CD8-positive, alpha-beta T cell (primary cell): ENCODE measurements at regions of chr7 and their contacts with region 1.

Region 1: DNA sequence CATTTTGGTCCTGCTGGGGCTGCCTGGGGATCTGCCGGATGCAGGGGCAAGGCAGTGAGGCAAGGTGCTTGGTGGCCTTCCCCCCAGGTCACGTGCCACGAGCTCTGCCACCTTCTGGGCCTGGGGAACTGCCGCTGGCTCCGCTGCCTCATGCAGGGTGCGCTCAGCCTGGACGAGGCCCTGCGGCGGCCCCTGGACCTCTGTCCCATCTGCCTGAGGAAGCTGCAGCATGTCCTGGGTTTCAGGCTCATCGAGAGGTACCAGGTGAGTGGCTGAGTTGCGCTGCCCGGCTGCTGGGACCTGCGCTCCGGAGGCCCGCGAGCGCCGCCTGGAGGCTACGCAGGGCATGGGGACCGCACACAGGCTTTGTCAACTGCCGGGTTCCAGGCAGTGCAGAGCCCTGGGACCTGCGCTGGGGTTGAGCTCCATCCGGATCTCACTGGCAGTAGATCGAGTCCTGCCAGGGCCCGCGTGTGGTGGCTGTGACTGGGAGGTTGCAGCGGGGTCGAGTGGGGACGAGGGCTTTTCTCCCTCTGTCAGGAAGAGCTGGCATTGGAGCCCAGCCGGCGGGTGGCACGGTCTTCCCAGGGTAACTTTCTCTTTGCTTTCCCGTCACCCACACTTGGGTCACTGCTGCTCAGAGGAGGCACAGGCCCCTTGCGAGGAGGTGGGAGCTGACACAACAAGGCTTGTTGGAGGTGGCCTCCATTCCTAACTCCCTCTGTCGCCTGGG is 21.7 kb downstream of the AMZ1 start:
- DNase-seq: peak; percentile 58 to 90 (median 76)
- ATAC-seq: peak; percentile 78
- H3K4me3 ChIP-seq: peak overlapping the region; percentile 31 to 38
- H3K4me3 Mint-ChIP-seq: peak overlapping the region; percentile 66
- H3K27ac ChIP-seq: no peak overlapping the region
- H3K27ac Mint-ChIP-seq: peak overlapping the region; percentile 62
- H3K4me1 ChIP-seq: peaks cover 32% of the 10 kb centered on the region
- H3K4me1 Mint-ChIP-seq: peaks cover 30% of the 10 kb centered on the region
- H3K27me3 ChIP-seq: peaks cover 7 to 9% of the 10 kb centered on the region in 2 experiments
- H3K27me3 Mint-ChIP-seq: peaks cover 8% of the 10 kb centered on the region
- CTCF ChIP-seq: peak; percentile 83

Region 2: DNA sequence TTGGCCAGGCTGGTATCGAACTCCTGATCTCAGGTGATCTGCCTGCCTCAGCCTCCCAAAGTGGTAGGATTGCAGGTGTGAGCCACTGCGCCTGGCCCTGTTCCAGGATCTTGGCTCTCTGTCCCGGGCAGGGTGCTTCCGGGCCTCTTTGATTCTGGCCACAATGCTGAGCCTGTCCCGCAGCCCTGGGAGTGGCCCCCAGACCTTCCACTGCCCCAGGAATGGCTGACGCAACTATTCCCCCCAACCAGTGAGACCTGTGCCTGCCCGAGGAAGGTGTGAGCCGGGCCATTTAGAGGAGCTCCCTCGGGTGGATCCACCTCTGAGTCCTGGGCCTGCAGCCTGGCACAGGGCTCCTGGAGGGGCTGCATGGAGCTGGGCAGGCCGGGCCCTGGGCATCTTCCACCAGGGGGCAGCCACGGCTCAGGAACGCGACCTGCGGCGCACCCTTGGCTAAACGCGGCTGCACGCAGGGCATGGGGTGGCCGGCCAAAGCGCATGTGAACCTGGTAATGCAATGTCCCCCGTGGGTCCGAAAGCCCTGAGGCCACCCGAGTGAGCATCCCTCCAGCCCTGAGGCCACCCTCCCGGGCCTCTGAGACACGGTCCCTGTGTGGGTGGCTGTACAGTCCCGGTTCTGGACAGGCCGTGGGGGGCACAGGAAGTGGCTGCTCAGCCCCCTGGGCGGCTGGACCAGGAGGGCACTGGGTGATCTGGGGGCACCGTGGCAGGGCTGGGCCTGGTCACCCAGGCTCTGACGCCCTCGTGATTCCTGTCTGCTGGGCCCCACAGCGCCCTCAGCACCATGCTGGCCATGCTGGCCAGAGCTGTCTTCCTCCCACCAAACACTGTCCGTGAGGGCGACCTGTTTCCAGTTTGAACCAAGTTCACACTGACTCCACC is 258.3 kb before region 1 on chr7:
- CTCF ChIA-PET with region 1: interaction called, 36 read pairs
- POLR2A ChIA-PET with region 1: no interaction called
- intact Hi-C with region 1: loop called (anchors 1 kb)
- DNase-seq: peak; percentile 55 to 87 (median 79)
- ATAC-seq: peak; percentile 96
- H3K4me3 ChIP-seq: peak overlapping the region; percentile 45 to 56
- H3K4me3 Mint-ChIP-seq: peak overlapping the region; percentile 67
- H3K27ac ChIP-seq: no peak overlapping the region
- H3K27ac Mint-ChIP-seq: no peak overlapping the region
- H3K4me1 ChIP-seq: peaks cover 8% of the 10 kb centered on the region
- H3K4me1 Mint-ChIP-seq: peaks cover 11% of the 10 kb centered on the region
- H3K27me3 ChIP-seq: no peaks in the 10 kb centered on the region
- H3K27me3 Mint-ChIP-seq: no peaks in the 10 kb centered on the region
- CTCF ChIP-seq: peak; percentile 70

Region 3: GRCh38 chr7:2670720-2671391 is 38.9 kb before region 1 on chr7:
- CTCF ChIA-PET with region 1: interaction called, 264 read pairs
- POLR2A ChIA-PET with region 1: interaction called, 11 read pairs
- intact Hi-C with region 1: loop called (anchors 1 kb)
- DNase-seq: peak; percentile 37 to 83 (median 73)
- ATAC-seq: peak; percentile 87
- H3K4me3 ChIP-seq: no peak overlapping the region
- H3K4me3 Mint-ChIP-seq: no peak overlapping the region
- H3K27ac ChIP-seq: no peak overlapping the region
- H3K27ac Mint-ChIP-seq: no peak overlapping the region
- H3K4me1 ChIP-seq: peaks cover 8% of the 10 kb centered on the region
- H3K4me1 Mint-ChIP-seq: peaks cover 6% of the 10 kb centered on the region
- H3K27me3 ChIP-seq: no peaks in the 10 kb centered on the region
- H3K27me3 Mint-ChIP-seq: peaks cover 21% of the 10 kb centered on the region
- CTCF ChIP-seq: peak; percentile 87

Region 4: DNA sequence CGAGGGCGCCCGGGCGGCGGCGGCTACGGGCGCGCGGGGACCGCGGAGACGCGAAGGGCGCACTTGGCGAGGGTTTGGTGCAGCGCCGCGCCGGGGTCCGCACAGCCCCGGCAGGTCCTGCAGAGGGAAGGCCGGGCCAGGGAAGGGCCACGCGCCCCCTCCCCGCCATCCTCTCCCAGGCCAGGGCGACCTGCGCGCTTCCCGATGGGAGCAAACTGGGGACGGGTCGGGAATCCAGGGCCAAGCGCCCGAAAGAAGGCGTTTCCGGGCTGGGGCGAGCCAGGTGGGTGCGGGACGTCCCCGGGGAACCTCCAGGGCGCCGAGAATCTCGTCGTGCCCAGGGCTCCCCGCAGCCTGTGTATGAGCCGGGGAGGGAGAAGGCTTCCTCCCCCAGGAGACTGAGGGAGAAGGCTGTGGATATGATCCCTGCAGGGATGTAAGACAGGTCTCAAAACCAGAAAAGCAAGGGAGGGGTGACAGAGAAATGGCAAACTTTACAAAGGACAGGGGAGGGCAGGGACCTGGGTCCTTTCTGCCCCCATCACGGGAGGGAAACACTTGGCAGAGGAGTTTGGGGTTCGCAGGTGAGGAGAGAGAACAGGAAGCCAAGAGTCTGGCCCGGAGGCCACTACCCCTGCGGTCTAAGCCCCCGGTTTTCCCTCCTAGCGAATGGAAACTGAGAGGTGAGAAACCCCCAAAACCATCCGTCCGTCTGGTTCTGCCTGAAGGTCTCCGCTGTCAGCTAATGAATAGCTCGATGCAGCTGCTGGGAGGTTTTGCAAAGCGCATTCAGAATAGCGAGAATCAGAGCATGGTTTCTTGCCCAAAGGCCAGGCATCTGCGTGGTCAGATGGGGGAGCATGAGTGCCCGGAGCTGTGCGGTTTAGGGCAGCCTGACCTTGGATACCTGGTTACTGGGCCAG is 21.0 kb before region 1 on chr7:
- CTCF ChIA-PET with region 1: interaction called, 27 read pairs
- POLR2A ChIA-PET with region 1: no interaction called
- intact Hi-C with region 1: no loop called
- DNase-seq: peak in 1 of 9 experiments; percentile 41
- ATAC-seq: no peak
- H3K4me3 ChIP-seq: no peak overlapping the region
- H3K4me3 Mint-ChIP-seq: peak overlapping the region; percentile 47
- H3K27ac ChIP-seq: no peak overlapping the region
- H3K27ac Mint-ChIP-seq: no peak overlapping the region
- H3K4me1 ChIP-seq: peaks cover 13% of the 10 kb centered on the region
- H3K4me1 Mint-ChIP-seq: peaks cover 6% of the 10 kb centered on the region
- H3K27me3 ChIP-seq: peaks cover 7 to 26% of the 10 kb centered on the region in 2 experiments
- H3K27me3 Mint-ChIP-seq: peaks cover 34% of the 10 kb centered on the region
- CTCF ChIP-seq: no peak

Region 5: GRCh38 chr7:2720582-2721491 is 11.1 kb after region 1 on chr7:
- CTCF ChIA-PET with region 1: interaction called, 37 read pairs
- POLR2A ChIA-PET with region 1: interaction called, 9 read pairs
- intact Hi-C with region 1: no loop called
- DNase-seq: peak; percentile 24 to 86 (median 66)
- ATAC-seq: peak; percentile 32
- H3K4me3 ChIP-seq: no peak overlapping the region
- H3K4me3 Mint-ChIP-seq: peak overlapping the region; percentile 42
- H3K27ac ChIP-seq: no peak overlapping the region
- H3K27ac Mint-ChIP-seq: peak overlapping the region; percentile 89
- H3K4me1 ChIP-seq: peaks cover 42% of the 10 kb centered on the region
- H3K4me1 Mint-ChIP-seq: peaks cover 55% of the 10 kb centered on the region
- H3K27me3 ChIP-seq: no peaks in the 10 kb centered on the region
- H3K27me3 Mint-ChIP-seq: peaks cover 9% of the 10 kb centered on the region
- CTCF ChIP-seq: no peak

Region 6: DNA sequence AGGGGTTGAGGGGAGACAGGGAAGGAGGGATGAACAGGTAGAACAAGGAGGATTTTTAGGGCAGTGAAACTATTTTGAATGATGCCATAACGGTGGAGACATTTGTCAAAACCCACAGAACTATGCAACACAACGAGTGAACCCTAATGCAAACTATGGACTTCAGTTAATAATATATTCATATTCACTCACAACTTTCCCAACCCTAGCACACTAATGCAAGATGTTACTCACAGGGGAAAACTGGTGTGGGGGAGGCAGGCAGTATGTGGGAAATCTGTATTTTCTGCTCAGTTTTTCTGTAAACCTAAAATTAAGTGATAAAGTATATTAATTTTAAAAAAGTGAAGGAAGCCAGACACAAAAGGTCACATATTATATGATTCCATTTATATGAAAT is 117.1 kb after region 1 on chr7:
- CTCF ChIA-PET with region 1: no interaction called
- POLR2A ChIA-PET with region 1: no interaction called
- intact Hi-C with region 1: no loop called
- DNase-seq: no peak
- ATAC-seq: no peak
- H3K4me3 ChIP-seq: no peak overlapping the region
- H3K4me3 Mint-ChIP-seq: no peak overlapping the region
- H3K27ac ChIP-seq: no peak overlapping the region
- H3K27ac Mint-ChIP-seq: no peak overlapping the region
- H3K4me1 ChIP-seq: no peaks in the 10 kb centered on the region
- H3K4me1 Mint-ChIP-seq: peaks cover 34% of the 10 kb centered on the region
- H3K27me3 ChIP-seq: no peaks in the 10 kb centered on the region
- H3K27me3 Mint-ChIP-seq: no peaks in the 10 kb centered on the region
- CTCF ChIP-seq: no peak

Region 7: DNA sequence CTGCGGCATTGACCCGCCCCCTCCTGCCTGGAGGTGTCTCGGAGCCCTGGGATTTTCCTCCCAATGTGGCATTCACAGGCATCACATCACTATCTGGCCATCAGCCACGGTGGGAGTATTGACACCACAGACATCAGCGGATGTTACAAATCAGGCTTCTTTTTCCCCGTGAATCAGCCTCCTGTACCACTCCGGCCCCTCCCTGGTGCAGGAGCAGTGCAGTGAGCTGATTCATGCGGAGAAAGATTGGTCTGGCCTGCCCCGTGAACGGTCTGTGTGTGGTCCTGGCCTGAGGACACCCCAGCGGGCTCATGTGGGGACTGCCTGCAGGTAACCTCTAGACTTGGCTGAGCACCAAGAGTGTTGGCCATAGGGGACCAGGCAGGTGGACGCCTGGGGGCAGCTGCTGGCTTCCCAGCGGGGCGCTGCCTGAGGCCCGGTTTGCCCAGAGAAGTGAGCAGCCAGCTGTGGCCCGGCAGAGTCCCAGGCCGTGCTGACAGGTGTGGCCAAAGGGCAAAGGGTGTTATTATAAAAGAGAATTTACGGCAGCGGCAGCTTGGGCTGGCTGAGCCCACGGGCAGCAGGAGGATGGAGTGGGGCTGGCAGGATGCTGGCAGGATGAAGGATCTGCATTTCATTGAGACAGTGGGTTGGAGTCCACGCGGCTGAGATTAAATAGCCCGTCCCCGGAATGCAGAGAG is 166.5 kb after region 1 on chr7:
- CTCF ChIA-PET with region 1: no interaction called
- POLR2A ChIA-PET with region 1: no interaction called
- intact Hi-C with region 1: no loop called
- DNase-seq: no peak
- ATAC-seq: no peak
- H3K4me3 ChIP-seq: no peak overlapping the region
- H3K4me3 Mint-ChIP-seq: no peak overlapping the region
- H3K27ac ChIP-seq: no peak overlapping the region
- H3K27ac Mint-ChIP-seq: no peak overlapping the region
- H3K4me1 ChIP-seq: peaks cover 23% of the 10 kb centered on the region
- H3K4me1 Mint-ChIP-seq: peaks cover 42% of the 10 kb centered on the region
- H3K27me3 ChIP-seq: no peaks in the 10 kb centered on the region
- H3K27me3 Mint-ChIP-seq: no peaks in the 10 kb centered on the region
- CTCF ChIP-seq: no peak

Region 8: DNA sequence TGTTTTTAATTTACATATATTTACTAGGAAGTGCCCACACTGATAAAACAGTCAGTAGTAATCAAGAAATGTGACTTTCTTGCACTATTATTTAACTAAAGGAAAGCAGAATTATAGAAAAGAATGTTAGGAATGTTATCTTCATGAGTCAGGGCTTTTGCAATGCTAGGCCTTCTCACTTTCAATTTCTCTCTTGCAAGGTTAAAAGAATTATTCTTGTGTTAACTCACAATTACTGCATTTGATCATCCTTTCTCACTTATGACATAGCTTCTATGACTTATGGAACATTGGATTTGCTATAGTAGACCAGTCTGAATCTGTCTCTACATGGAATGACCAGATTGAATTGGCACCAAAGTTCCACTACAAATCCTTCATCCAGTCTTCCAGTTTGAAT is 783.8 kb after region 1 on chr7:
- CTCF ChIA-PET with region 1: no interaction called
- POLR2A ChIA-PET with region 1: no interaction called
- intact Hi-C with region 1: no loop called
- DNase-seq: no peak
- ATAC-seq: no peak
- H3K4me3 ChIP-seq: no peak overlapping the region
- H3K4me3 Mint-ChIP-seq: no peak overlapping the region
- H3K27ac ChIP-seq: no peak overlapping the region
- H3K27ac Mint-ChIP-seq: no peak overlapping the region
- H3K4me1 ChIP-seq: no peaks in the 10 kb centered on the region
- H3K4me1 Mint-ChIP-seq: peaks cover 8% of the 10 kb centered on the region
- H3K27me3 ChIP-seq: no peaks in the 10 kb centered on the region
- H3K27me3 Mint-ChIP-seq: peaks cover 4% of the 10 kb centered on the region
- CTCF ChIP-seq: no peak